Aorta (tissue), 5 donors: ENCODE measurements at regions of chr17 and their contacts with region 1.

Region 1: GRCh38 chr17:7851438-7852256 is 3.2 kb upstream of the TMEM88 start:
- DNase-seq: peak; percentile 94 to 97
- ATAC-seq: peak; percentile 89
- H3K4me3 ChIP-seq: no peak overlapping the region
- H3K27ac ChIP-seq: no peak overlapping the region
- H3K4me1 ChIP-seq: no peaks in the 10 kb centered on the region
- H3K27me3 ChIP-seq: no peaks in the 10 kb centered on the region

Region 2: DNA sequence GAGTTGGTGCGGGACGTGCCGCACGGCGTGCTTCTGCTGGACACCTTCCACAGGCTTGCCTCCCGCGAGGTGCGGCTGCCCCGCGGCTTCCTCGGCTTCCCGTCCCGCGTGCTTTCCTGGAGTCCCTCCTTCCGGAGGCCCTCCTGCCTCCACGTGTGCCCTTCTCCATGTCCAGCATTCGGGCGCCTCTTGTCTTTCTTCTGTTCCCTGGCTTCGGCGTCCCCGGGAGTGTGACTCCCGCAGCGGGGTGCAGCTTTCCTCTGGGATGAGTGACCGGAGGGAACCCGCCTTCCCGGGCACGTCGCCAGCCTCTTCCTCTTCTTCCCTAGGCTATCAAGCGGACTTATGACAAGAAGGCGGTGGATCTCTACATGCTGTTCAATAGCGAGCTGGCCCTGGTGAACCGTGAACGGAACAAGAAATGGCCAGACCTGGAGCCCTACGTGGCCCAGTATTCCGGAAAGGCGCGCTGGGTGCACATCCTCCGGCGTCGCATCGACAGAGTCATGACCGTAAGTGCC is 111.1 kb before region 1 on chr17:
- intact Hi-C with region 1: loop called (anchors 5 to 10 kb)
- DNase-seq: no peak
- ATAC-seq: no peak
- H3K4me3 ChIP-seq: no peak overlapping the region
- H3K27ac ChIP-seq: no peak overlapping the region
- H3K4me1 ChIP-seq: no peaks in the 10 kb centered on the region
- H3K27me3 ChIP-seq: no peaks in the 10 kb centered on the region

Region 3: GRCh38 chr17:7823581-7824397 is 27.9 kb before region 1 on chr17:
- intact Hi-C with region 1: loop called (anchors 1 kb)
- DNase-seq: peak in 1 of 2 donors; percentile 66
- ATAC-seq: no peak
- H3K4me3 ChIP-seq: no peak overlapping the region
- H3K27ac ChIP-seq: no peak overlapping the region
- H3K4me1 ChIP-seq: no peaks in the 10 kb centered on the region
- H3K27me3 ChIP-seq: no peaks in the 10 kb centered on the region